ENCODE measurements at regions of chr1 and their contacts with region 1.

Region 1: GRCh38 chr1:36088575-36089443 is at the start of gene ADPRS:
- DNase-seq: peak; percentile 88 to 94 (median 90)
- H3K4me3 ChIP-seq: peak within 1 kb of the TSS; percentile 7 to 93 (median 74)
- H3K27ac ChIP-seq: peak within 1 kb of the TSS; percentile 79 to 92 (median 84)
- H3K4me1 ChIP-seq: peaks cover 23 to 41% of the 10 kb centered on the region in 2 donors
- H3K27me3 ChIP-seq: no peaks in the 10 kb centered on the region
- CTCF ChIP-seq: peak; percentile 86 to 99 (median 98)
- POLR2A ChIP-seq: peak; percentile 92 to 94
- total RNA-seq, gene ADPRS: 43.3 to 84.5 (median 55.1) TPM

Region 2: DNA sequence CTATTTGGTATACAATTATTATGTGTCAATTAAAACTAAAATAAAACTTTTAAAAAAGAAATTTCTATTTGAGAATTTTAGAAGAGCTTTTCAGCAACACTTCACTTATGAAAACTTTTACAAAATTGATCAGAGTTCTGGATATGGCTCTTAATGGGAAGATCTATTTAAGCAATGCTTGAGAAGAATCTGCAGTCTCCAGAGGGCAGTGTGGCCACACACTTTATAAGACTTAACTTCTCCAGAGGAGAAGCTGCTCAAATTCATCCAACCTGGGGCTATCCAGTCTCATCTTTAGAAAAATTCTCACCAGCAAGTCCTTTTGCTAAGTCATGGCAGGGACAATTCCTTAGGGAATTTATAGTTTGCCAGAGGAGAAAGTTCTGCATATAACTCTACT is 231.0 kb before region 1 on chr1:
- intact Hi-C with region 1: loop called in 1 of 2 experiments (anchors 10 kb)
- DNase-seq: peak in 4 of 7 donors; percentile 20 to 60 (median 44)
- H3K4me3 ChIP-seq: no peak overlapping the region
- H3K27ac ChIP-seq: no peak overlapping the region
- H3K4me1 ChIP-seq: no peaks in the 10 kb centered on the region
- H3K27me3 ChIP-seq: no peaks in the 10 kb centered on the region
- CTCF ChIP-seq: peak in 5 of 6 experiments; percentile 16 to 44 (median 20)
- POLR2A ChIP-seq: no peak

Region 3: DNA sequence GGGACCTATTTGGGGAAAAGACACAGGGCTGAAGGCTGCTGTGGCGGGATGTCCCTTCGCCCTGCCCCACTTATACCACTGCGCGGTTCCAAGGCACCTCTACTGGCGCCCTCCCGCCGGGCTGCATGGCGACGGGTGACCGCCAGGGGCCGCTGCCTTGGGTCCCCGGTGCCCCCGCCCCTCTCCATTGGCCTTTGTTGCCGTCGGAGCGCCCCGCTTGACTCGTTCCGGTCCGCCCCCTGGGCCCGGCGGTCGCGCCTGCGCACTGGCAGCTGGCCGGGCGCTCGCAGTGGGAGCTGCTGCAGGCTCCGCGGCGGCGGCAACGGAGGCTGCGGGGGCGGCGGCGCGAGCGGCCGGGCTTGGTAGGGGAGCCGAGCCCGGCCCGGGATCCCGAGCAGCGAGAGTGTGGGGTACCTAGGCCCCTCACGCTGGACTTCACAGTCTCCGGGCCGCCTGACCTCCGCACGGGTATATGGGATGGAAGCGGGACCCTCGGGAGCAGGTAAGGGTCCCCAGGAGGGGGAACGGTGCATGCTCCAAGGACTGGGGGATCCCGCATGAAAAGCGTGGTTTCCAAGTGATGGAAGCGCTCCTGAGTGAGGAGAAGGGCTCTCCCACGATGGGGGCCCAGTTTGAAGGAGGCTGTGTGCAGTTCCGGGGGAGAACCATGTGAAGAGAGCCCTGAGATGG is 205.7 kb before region 1 on chr1 and contains the start of gene AGO1:
- intact Hi-C with region 1: loop called in 1 of 2 experiments (anchors 10 kb)
- DNase-seq: peak; percentile 95 to 97 (median 95)
- H3K4me3 ChIP-seq: peak within 1 kb of the TSS; percentile 74 to 97 (median 90)
- H3K27ac ChIP-seq: peak within 1 kb of the TSS; percentile 52 to 85 (median 74)
- H3K4me1 ChIP-seq: peaks cover 0 to 36% of the 10 kb centered on the region in 2 donors
- H3K27me3 ChIP-seq: no peaks in the 10 kb centered on the region
- CTCF ChIP-seq: peak; percentile 84 to 98 (median 92)
- POLR2A ChIP-seq: peak; percentile 60 to 87
- total RNA-seq, gene AGO1: 17.0 to 51.1 (median 34.0) TPM

Region 4: GRCh38 chr1:35929730-35930592 is 158.8 kb before region 1 on chr1:
- intact Hi-C with region 1: loop called in 1 of 2 experiments (anchors 10 kb)
- DNase-seq: peak; percentile 48 to 85 (median 71)
- H3K4me3 ChIP-seq: peak overlapping the region; percentile 79 to 98 (median 80)
- H3K27ac ChIP-seq: peak overlapping the region; percentile 93 to 100 (median 99)
- H3K4me1 ChIP-seq: peaks cover 12 to 30% of the 10 kb centered on the region in 2 donors
- H3K27me3 ChIP-seq: no peaks in the 10 kb centered on the region
- CTCF ChIP-seq: no peak
- POLR2A ChIP-seq: no peak